Activated CD4-positive, alpha-beta T cell treated with anti-CD3 and anti-CD28 coated beads, Interleukin-2, amount 10 ng/mL, durations not matched to agents 24 days and 14 days (primary cell): ENCODE measurements at regions of chr6 and their contacts with region 1.

Region 1: GRCh38 chr6:157099912-157100593 is 223.3 kb downstream of the TMEM242 start:
- DNase-seq: peak; percentile 84
- H3K4me3 Mint-ChIP-seq: peak overlapping the region; percentile 73
- H3K27ac Mint-ChIP-seq: peak overlapping the region; percentile 92
- H3K4me1 Mint-ChIP-seq: peaks cover 39% of the 10 kb centered on the region
- H3K27me3 Mint-ChIP-seq: no peaks in the 10 kb centered on the region

Region 2: DNA sequence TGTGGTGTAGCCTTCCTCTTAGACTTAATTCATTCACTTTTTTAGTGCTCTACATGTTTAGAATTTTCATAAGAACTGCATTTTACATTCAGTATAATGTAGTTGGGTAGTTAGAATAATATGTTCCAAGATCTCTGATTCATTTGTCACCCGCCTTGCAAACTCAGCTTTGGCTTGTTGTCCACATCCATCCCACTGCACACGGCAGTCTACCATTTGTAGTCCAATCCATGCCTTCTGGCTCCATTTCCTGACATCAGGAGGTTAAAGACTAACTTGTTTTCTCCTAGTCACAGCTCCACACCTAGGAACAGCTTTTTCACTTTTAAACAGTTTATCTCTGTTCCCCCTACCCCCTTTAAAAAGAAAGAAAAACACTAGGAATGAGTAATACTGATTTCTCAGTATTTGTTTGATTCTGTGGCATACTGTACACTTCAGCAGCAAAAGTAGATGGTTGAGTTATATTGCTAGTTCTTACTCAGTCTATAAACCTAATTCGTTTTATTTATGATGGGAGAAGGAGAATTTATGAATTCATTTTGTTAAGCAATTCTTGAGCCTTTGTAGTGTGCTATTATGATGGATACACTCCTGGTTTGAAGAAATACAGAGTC is 142.0 kb before region 1 on chr6:
- intact Hi-C with region 1: loop called (anchors 5 kb)
- DNase-seq: no peak
- H3K4me3 Mint-ChIP-seq: no peak overlapping the region
- H3K27ac Mint-ChIP-seq: peak overlapping the region; percentile 72
- H3K4me1 Mint-ChIP-seq: peaks cover 34% of the 10 kb centered on the region
- H3K27me3 Mint-ChIP-seq: no peaks in the 10 kb centered on the region

Region 3: DNA sequence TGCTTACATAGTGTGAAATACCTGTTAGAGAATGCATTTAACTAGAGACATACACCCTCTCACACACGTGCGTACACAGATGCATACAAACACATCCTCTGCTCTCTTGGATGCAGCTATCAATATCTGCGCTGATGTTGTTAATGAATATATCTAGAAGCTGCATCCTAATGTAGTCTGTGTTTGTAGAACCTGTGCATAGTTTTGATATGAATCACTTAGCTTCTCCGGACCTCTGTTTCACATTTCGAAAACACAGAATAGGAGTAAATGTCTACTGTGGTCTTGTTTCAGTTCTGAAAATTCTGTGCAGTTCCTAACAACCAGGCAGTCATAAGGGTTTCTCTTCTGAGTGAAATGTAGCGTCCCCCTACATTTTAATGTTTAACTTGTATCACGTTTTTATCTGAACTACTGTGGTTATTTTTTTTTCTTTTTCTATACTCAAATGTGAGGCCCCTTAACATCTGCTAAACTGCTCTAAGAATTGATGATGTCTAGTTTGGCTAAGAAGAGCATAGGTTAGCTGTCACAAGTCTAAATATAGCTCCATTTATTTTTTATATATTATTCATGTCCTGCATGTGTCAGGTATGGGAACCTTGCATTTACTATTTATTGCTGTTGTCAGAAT is 31.2 kb before region 1 on chr6:
- intact Hi-C with region 1: loop called (anchors 1 kb)
- DNase-seq: peak; percentile 64
- H3K4me3 Mint-ChIP-seq: peak overlapping the region; percentile 53
- H3K27ac Mint-ChIP-seq: peak overlapping the region; percentile 77
- H3K4me1 Mint-ChIP-seq: peaks cover 31% of the 10 kb centered on the region
- H3K27me3 Mint-ChIP-seq: no peaks in the 10 kb centered on the region

Region 4: GRCh38 chr6:157075549-157076450 is 24.3 kb before region 1 on chr6:
- intact Hi-C with region 1: loop called (anchors 1 kb)
- DNase-seq: peak; percentile 69
- H3K4me3 Mint-ChIP-seq: peak overlapping the region; percentile 77
- H3K27ac Mint-ChIP-seq: peak overlapping the region; percentile 98
- H3K4me1 Mint-ChIP-seq: peaks cover 36% of the 10 kb centered on the region
- H3K27me3 Mint-ChIP-seq: no peaks in the 10 kb centered on the region